ENCODE measurements at regions of chr5 and their contacts with region 1.

Region 1: GRCh38 chr5:80255732-80256479 is at the start of gene SERINC5:
- DNase-seq: peak; percentile 87

Region 2: GRCh38 chr5:80191991-80192398 is 63.9 kb before region 1 on chr5:
- CTCF ChIA-PET with region 1: no interaction called
- POLR2A ChIA-PET with region 1: interaction called, 10 read pairs
- DNase-seq: no peak

Measured in HEK293T (cell line).